MCF 10A (cell line): ENCODE measurements at regions of chr18 and their contacts with region 1.

Region 1: DNA sequence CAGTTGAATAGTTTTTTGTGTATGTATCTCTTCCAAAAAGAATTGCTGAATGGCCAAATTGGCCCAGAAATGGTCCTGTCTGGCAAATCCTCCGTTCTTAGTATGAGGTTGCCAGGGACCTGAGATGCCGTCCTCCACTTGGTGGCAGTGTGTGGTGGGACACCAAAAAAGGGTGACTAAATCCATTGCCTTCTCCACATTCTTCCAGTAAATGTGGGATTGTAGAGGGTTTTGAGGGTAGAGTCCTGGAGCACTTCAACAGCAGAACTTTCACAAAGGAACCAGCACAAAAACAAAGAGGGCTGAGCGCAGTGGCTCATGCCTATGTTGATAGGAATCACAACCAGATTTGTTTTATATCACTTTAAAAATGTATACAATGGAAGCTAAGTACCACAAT is 199.9 kb downstream of the BCL2 start:
- DNase-seq: peak; percentile 22
- H3K4me3 Mint-ChIP-seq: no peak overlapping the region
- H3K27ac Mint-ChIP-seq: no peak overlapping the region
- H3K4me1 Mint-ChIP-seq: no peaks in the 10 kb centered on the region
- H3K27me3 Mint-ChIP-seq: no peaks in the 10 kb centered on the region
- CTCF ChIP-seq: peak; percentile 15

Region 2: GRCh38 chr18:63320046-63320689 is 200.5 kb after region 1 on chr18:
- CTCF ChIA-PET with region 1: interaction called, 12 read pairs
- POLR2A ChIA-PET with region 1: no interaction called
- intact Hi-C with region 1: no loop called
- DNase-seq: peak; percentile 83
- H3K4me3 Mint-ChIP-seq: peak overlapping the region; percentile 96
- H3K27ac Mint-ChIP-seq: no peak overlapping the region
- H3K4me1 Mint-ChIP-seq: peaks cover 23% of the 10 kb centered on the region
- H3K27me3 Mint-ChIP-seq: no peaks in the 10 kb centered on the region
- CTCF ChIP-seq: no peak